PC-9 (cell line): ENCODE measurements at regions of chr10 and their contacts with region 1.

Region 1: DNA sequence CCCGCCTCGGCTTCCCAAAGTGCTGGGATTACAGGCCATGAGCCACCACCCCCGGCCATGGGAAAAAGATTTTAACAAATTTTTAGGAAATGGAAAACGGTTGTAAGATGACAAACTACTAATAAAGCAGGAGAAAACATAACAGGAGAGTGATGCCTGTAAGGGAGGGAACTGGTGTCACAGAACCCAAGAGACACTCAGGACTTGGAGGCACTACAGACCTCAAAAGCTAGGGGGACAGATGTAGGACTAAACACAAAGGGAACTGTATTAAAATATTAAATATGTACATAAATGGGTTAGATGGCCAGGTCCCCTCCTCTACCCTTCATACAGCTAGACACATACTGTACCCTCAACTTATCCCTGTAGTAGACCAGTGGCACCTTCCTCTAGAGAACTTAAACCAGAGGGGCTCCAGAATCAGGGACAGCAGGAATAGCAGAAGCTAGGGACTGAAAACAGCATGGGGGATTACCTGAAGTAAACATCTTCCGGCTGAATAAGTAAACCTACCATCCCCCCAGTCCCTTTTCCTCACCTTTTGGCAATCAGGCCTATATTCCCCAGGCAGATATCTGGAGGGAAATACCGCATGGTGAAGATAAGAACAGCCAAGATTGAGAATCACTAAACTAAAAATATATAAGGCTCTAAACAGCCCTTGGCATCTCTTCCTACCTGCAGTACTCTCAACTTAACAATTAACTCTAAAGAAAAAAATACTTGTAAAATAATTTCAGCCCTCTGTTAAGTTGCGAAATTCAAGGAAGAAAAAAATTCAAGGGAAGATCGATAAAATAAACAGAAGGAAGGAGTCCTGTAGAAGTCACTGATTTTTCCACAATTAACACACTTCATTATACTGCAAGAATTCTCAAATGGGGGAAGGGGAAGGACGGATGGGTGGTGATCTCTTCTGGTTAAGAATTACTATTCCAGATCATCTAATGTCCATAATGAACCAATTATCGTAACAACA is 15.5 kb downstream of the TM9SF3 start:
- DNase-seq: no peak
- H3K4me3 ChIP-seq: no peak overlapping the region
- H3K27ac ChIP-seq: no peak overlapping the region
- H3K4me1 ChIP-seq: no peaks in the 10 kb centered on the region
- H3K27me3 ChIP-seq: no peaks in the 10 kb centered on the region
- CTCF ChIP-seq: no peak

Region 2: DNA sequence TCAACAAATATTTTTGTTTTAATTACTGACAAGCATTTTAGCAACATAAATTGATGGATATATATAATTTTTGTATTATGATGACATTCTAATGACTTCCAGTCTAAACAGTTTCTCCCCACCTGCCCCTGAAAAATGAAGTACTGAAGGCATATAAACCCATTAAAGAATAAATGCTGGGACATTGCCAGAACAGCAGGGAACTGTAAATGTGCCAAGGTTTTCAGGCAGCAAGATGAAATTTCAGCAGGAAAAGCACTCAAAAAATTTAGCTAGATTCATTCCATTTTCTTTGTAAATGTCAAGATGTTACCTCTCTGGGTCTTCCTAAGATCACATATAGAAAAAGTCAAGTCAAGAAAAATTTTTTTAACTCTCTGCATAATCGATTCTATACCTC is 46.5 kb before region 1 on chr10:
- CTCF ChIA-PET with region 1: no interaction called
- POLR2A ChIA-PET with region 1: no interaction called
- intact Hi-C with region 1: loop called (anchors 10 kb)
- DNase-seq: no peak
- H3K4me3 ChIP-seq: no peak overlapping the region
- H3K27ac ChIP-seq: no peak overlapping the region
- H3K4me1 ChIP-seq: no peaks in the 10 kb centered on the region
- H3K27me3 ChIP-seq: no peaks in the 10 kb centered on the region
- CTCF ChIP-seq: no peak

Region 3: GRCh38 chr10:97332586-97333309 is 761.5 kb after region 1 on chr10:
- CTCF ChIA-PET with region 1: no interaction called
- POLR2A ChIA-PET with region 1: no interaction called
- intact Hi-C with region 1: no loop called
- DNase-seq: peak; percentile 22 to 43
- H3K4me3 ChIP-seq: peak overlapping the region; percentile 81
- H3K27ac ChIP-seq: peak overlapping the region; percentile 50
- H3K4me1 ChIP-seq: peaks cover 53% of the 10 kb centered on the region
- H3K27me3 ChIP-seq: no peaks in the 10 kb centered on the region
- CTCF ChIP-seq: no peak; the same call in 1 of the 2 replicates